ENCODE measurements at regions of chr5 and their contacts with region 1.

Region 1: GRCh38 chr5:157142317-157143126 is at the start of gene MED7:
- DNase-seq: peak; percentile 97
- CTCF ChIP-seq: no peak

Region 2: DNA sequence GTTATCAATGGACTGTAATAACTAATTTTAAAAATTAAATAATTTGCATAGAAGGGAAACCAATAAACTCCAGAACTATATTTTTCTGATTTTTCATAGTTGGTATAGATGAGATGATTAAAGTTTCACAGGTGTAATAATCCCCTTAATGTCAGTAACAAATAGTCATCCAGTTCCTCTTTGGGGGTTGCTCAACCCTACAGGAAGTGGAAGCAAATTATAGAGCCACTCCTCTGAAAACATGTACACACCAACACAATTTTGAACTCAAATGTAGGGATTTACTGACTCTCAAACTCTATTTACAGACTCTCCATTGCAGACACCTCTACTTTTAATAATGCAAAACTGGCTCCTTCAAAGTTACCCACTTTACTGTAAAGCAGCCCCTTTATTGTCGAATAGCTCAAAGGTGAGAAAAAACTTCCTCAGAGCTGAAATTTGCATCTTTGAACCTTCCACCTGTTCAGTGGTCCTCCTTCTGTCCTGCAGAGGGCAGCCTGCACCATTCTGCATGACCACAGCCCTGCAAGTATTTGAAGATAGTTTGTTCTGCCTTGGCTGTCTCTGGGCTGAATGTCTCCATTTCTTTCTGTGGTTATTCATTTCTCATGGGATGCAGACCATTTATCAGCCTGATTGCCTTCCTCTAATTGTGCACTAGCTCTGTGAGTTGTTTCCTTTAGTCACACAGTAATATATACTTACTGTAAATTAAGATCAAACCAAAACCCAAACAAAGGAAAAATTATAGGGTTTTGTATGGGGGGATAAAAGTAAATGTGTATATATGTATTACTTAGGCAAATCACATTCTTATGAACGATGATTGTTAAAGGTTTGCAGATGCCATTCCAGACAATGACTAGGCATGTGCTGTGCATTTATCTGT is 1198.8 kb before region 1 on chr5:
- in situ Hi-C with region 1: loop called (anchors 25 kb)
- DNase-seq: peak; percentile 29
- CTCF ChIP-seq: peak; percentile 67

Region 3: DNA sequence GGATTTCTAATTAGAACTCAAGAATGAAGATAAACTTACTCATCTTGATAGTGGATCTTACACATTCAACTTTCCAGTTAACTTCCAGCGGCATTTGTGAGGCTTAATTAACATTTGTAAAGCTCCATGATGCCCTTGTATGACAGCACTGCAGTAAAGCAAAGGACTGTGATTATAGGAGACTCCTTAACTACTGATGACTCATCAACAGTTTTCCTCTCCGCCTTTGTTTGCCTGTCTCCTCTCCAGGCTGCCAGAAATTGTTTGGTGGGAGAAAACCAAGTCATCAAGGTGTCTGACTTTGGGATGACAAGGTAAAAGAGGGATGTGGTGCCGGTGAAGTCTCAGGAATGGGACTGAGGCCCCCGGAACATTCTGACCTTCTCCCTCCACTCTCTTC is 103.0 kb after region 1 on chr5:
- in situ Hi-C with region 1: loop called (anchors 10 kb)
- DNase-seq: no peak
- CTCF ChIP-seq: no peak

Measured in GM13976 (cell line).